ENCODE measurements at regions of chr3 and their contacts with region 1.

Region 1: GRCh38 chr3:129490242-129491045 is 38.0 kb upstream of the RHO start:
- DNase-seq: peak; percentile 12
- ATAC-seq: peak; percentile 99
- H3K4me3 ChIP-seq: no peak overlapping the region
- H3K27ac ChIP-seq: no peak overlapping the region
- H3K4me1 ChIP-seq: peaks cover 15% of the 10 kb centered on the region
- H3K27me3 ChIP-seq: no peaks in the 10 kb centered on the region
- CTCF ChIP-seq: peak; percentile 84 to 89 (median 86)
- EP300 ChIP-seq: no peak
- POLR2A ChIP-seq: no peak
- RAD21 ChIP-seq: peak; percentile 83

Region 2: DNA sequence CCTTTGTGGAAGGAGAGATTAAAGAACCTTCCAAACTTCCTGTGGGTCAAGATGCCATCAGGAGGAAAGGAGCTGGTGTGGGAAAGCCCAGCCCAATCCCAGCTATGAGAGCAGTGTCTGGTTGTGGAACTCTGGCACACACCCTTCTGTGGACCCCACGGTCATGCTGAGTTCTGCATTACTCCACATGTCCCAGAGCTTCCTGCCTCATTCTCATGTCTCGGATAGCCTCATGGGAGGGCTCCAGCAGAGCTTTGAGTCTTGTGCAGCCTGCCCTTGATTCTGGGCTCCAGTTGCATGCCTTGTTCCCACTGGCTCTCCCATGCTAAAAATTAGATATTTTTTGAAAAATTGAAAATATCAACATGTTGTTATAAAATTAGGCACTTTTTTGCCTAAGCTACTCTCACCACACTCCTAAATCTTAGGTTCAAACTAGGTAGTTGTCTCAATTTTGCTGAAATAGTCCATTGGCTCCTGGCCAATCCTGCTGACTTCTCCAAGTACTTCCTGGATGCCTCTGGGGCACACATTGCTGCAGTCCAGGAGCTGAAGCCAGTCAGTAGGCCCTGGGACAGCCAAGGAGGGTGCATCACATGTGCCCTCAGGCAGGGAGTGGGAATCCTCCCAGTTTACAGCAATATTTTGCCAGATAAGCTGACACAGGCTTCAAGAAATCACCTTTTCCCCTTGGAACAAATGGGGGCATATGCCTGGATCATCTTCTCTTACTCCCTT is 1192.9 kb before region 1 on chr3:
- CTCF ChIA-PET with region 1: no interaction called
- POLR2A ChIA-PET with region 1: no interaction called
- RAD21 ChIA-PET with region 1: no interaction called
- SMC1A ChIA-PET with region 1: no interaction called
- in situ Hi-C with region 1: no loop called
- intact Hi-C with region 1: no loop called
- DNase-seq: no peak
- ATAC-seq: no peak
- H3K4me3 ChIP-seq: no peak overlapping the region
- H3K27ac ChIP-seq: no peak overlapping the region
- H3K4me1 ChIP-seq: no peaks in the 10 kb centered on the region
- H3K27me3 ChIP-seq: no peaks in the 10 kb centered on the region
- CTCF ChIP-seq: no peak
- EP300 ChIP-seq: no peak
- POLR2A ChIP-seq: no peak
- RAD21 ChIP-seq: no peak

Region 3: GRCh38 chr3:129526121-129526900 is 35.9 kb after region 1 on chr3:
- CTCF ChIA-PET with region 1: interaction called, 13 read pairs
- POLR2A ChIA-PET with region 1: no interaction called
- RAD21 ChIA-PET with region 1: interaction called, 11 read pairs
- SMC1A ChIA-PET with region 1: no interaction called
- in situ Hi-C with region 1: no loop called
- intact Hi-C with region 1: no loop called
- DNase-seq: peak; percentile 25
- ATAC-seq: peak; percentile 99
- H3K4me3 ChIP-seq: no peak overlapping the region
- H3K27ac ChIP-seq: no peak overlapping the region
- H3K4me1 ChIP-seq: peaks cover 12% of the 10 kb centered on the region
- H3K27me3 ChIP-seq: no peaks in the 10 kb centered on the region
- CTCF ChIP-seq: no peak
- EP300 ChIP-seq: 0 out of 4 replicates have a peak, but pooled peaks of 1 of the 2 experiments have one; percentile 13
- POLR2A ChIP-seq: no peak
- RAD21 ChIP-seq: no peak

Region 4: GRCh38 chr3:129627429-129628168 is 137.2 kb after region 1 on chr3:
- CTCF ChIA-PET with region 1: interaction called, 28 read pairs
- POLR2A ChIA-PET with region 1: no interaction called
- RAD21 ChIA-PET with region 1: interaction called, 12 read pairs
- SMC1A ChIA-PET with region 1: interaction called, 12 read pairs
- in situ Hi-C with region 1: no loop called
- intact Hi-C with region 1: loop called (anchors 2 kb)
- DNase-seq: peak; percentile 45
- ATAC-seq: peak; percentile 68
- H3K4me3 ChIP-seq: peak overlapping the region; percentile 84
- H3K27ac ChIP-seq: peak overlapping the region; percentile 65
- H3K4me1 ChIP-seq: no peaks in the 10 kb centered on the region; the same call in 1 of the 2 replicates
- H3K27me3 ChIP-seq: no peaks in the 10 kb centered on the region; a peak in 1 of 4 replicates
- CTCF ChIP-seq: peak; percentile 85 to 92 (median 90)
- EP300 ChIP-seq: no peak
- POLR2A ChIP-seq: no peak
- RAD21 ChIP-seq: peak; percentile 90

Region 5: DNA sequence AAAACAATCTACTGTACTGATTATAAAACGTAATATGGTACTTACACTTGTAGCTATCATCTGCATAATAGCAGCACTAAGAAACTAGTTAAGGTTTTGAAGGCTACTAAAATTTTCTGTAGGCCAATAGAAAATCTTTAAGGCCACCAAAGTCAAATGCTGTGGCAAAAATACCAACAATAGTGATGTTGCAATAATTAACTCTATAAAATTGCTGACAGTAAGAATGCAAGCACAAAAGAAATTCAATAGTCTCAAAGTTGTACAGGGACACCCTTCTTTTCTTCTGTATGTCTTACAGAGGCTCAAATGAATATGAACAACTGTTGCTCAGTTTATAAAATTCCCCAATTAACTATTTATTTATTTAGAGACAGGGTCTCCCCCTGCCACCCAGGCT is 341.1 kb after region 1 on chr3:
- CTCF ChIA-PET with region 1: interaction called, 30 read pairs
- POLR2A ChIA-PET with region 1: no interaction called
- RAD21 ChIA-PET with region 1: interaction called, 11 read pairs
- SMC1A ChIA-PET with region 1: interaction called, 18 read pairs
- in situ Hi-C with region 1: loop called (anchors 5 kb)
- intact Hi-C with region 1: loop called (anchors 1 kb)
- DNase-seq: no peak
- ATAC-seq: no peak
- H3K4me3 ChIP-seq: no peak overlapping the region
- H3K27ac ChIP-seq: no peak overlapping the region
- H3K4me1 ChIP-seq: 0 out of 2 replicates have a peak, but pooled peaks cover 8% of the 10 kb centered on the region
- H3K27me3 ChIP-seq: no peaks in the 10 kb centered on the region
- CTCF ChIP-seq: no peak
- EP300 ChIP-seq: no peak
- POLR2A ChIP-seq: no peak
- RAD21 ChIP-seq: no peak

Measured in GM12878 (cell line).